ENCODE measurements at regions of chr6 and their contacts with region 1.

Region 1: DNA sequence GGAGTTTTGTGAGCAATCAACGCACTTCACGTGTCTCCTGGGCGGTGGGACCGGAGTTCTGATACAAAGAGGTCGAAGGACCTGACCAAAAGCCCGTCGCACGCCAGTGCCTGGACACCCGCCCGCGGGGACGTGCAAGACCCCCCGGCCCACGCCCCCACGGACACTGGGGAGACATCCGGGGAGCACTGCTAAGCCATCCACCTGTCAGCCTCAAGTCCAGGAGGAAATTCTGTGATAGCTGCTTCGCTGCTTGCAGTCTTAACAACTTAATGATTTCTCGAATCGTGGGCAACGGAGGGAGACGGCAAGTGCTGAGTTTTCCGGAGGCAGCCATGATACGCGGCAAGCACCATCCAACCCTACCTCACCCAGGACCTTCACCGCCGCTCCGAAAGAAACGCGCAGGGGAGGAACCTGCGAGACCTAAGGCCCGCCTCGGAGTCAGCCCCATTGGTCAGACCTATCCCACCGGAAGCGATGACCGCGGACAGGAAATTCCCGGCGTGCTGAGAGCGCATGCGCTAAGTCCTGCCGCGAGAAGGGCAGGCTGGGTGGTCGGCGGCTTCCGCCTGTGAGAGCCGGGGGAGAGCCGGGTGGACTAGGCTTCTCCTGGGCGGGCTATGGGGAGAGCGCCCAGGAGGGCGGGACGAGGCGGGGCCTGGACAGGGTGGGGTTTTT is at the start of gene TFB1M:
- DNase-seq: peak; percentile 100
- H3K4me3 Mint-ChIP-seq: peak within 1 kb of the TSS; percentile 99
- H3K27ac Mint-ChIP-seq: peak within 1 kb of the TSS; percentile 98
- H3K4me1 Mint-ChIP-seq: peaks cover 27% of the 10 kb centered on the region
- H3K27me3 Mint-ChIP-seq: peaks cover 2% of the 10 kb centered on the region
- total RNA-seq, gene TFB1M: 36.8 and 41.4 TPM in 2 replicates

Region 2: DNA sequence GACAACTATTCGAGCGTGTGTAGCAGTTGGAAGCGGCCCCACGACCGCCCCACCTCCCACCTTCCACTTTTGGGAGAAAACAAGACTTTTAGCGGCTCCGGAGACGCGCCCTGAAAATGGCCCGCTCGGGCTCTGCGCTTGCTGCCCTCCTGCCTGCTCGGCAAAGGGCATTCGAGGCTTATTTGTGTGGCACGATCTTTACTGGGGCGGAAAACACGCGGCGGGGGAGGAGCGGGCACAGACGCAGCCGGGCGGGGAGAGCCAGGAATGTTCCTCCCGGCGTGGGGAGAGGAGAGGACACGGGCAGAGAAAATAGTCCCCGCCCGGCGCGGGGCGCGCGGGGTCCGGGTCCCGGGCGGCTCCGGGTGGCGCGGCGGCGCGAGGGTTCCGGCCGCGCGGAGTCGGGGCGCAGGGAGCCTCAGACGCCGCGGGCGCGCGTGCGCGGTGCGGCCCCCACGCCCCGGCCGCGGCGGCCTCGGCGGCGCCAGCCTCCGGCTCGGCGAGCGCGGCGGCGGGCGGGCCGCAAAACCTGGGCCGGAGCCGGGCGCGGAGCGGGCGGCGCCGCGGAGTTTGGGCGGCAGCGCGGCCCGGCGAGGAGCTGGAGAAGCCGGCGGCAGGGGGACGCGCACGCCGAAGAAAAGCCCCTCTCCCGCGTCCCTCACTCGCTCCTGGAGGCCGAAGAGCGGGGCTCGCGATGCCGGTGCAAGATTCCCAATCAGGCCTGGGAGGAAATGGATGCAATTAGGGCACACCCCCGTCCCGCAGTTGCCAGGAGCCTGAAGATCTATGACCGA is 1373.0 kb after region 1 on chr6:
- intact Hi-C with region 1: loop called (anchors 10 kb)
- DNase-seq: peak; percentile 94
- H3K4me3 Mint-ChIP-seq: peak overlapping the region; percentile 89
- H3K27ac Mint-ChIP-seq: peak overlapping the region; percentile 94
- H3K4me1 Mint-ChIP-seq: peaks cover 20% of the 10 kb centered on the region
- H3K27me3 Mint-ChIP-seq: peaks cover 11% of the 10 kb centered on the region

Measured in activated CD4-positive, alpha-beta T cell treated with anti-CD3 and anti-CD28 coated beads, Interleukin-2, amount 10 ng/mL, durations not matched to agents 24 days and 14 days (primary cell).